ENCODE measurements at regions of chrX and their contacts with region 1.

Region 1: GRCh38 chrX:18674788-18675735 is 3.2 kb upstream of the RS1 start:
- DNase-seq: peak; percentile 70 to 79
- H3K4me3 ChIP-seq: peak overlapping the region; percentile 83
- H3K27ac ChIP-seq: no peak overlapping the region
- H3K4me1 ChIP-seq: peaks cover 4% of the 10 kb centered on the region; the same call in 1 of the 2 replicates
- H3K27me3 ChIP-seq: no peaks in the 10 kb centered on the region
- CTCF ChIP-seq: no peak

Region 2: GRCh38 chrX:18348047-18348446 is 327.0 kb before region 1 on chrX:
- CTCF ChIA-PET with region 1: interaction called, 18 read pairs
- POLR2A ChIA-PET with region 1: no interaction called
- intact Hi-C with region 1: no loop called
- DNase-seq: no peak
- H3K4me3 ChIP-seq: no peak overlapping the region
- H3K27ac ChIP-seq: no peak overlapping the region
- H3K4me1 ChIP-seq: no peaks in the 10 kb centered on the region
- H3K27me3 ChIP-seq: peaks cover 5% of the 10 kb centered on the region; the same call in 1 of the 2 replicates
- CTCF ChIP-seq: no peak

Region 3: GRCh38 chrX:18425199-18426003 is 249.7 kb before region 1 on chrX and contains the start of gene CDKL5:
- CTCF ChIA-PET with region 1: no interaction called
- POLR2A ChIA-PET with region 1: no interaction called
- intact Hi-C with region 1: loop called (anchors 2 kb)
- DNase-seq: peak; percentile 93 to 96
- H3K4me3 ChIP-seq: peak within 1 kb of the TSS; percentile 66
- H3K27ac ChIP-seq: no peak within 1 kb of the TSS
- H3K4me1 ChIP-seq: peaks cover 3% of the 10 kb centered on the region
- H3K27me3 ChIP-seq: no peaks in the 10 kb centered on the region
- CTCF ChIP-seq: no peak
- total RNA-seq, gene CDKL5: 4.2 and 5.0 TPM in 2 replicates

Region 4: DNA sequence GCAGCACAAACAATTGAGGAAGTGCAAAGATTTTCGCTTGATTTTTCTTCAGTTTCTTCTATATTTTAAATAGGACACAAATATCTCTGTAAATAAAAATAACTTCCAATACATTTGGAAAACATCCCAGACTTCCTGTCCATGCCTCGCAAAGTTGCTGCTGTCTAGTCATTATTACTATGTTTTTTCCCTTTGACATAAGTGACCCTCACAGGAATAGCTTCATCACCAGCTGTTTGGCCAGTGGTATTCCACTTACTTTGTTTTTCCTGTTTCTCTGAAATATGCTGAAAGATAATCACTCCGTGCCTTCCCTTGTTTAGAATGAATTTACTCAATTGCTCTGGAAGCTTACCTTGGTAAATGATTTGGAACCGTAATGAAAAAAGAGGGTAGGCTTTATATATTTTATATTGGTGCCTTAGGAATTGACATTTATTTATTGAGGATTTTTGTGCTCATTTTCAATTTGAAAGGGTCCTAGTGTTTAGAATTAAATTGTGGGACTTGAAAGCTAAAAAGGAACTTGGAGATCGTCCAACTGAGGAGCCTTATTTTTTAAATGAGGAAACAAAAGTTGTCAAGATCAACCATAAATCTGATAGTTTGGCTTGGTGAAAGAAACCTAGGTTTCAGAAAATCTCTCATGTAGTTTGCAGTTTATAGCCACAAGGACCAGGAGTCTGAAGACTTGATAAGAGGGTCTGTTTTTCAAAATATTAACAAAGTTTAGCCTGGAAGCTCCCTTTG is 184.1 kb before region 1 on chrX:
- CTCF ChIA-PET with region 1: no interaction called
- POLR2A ChIA-PET with region 1: no interaction called
- intact Hi-C with region 1: no loop called
- DNase-seq: no peak
- H3K4me3 ChIP-seq: no peak overlapping the region
- H3K27ac ChIP-seq: no peak overlapping the region
- H3K4me1 ChIP-seq: no peaks in the 10 kb centered on the region
- H3K27me3 ChIP-seq: no peaks in the 10 kb centered on the region
- CTCF ChIP-seq: no peak

Region 5: GRCh38 chrX:18769812-18770573 is 94.9 kb after region 1 on chrX:
- CTCF ChIA-PET with region 1: no interaction called
- POLR2A ChIA-PET with region 1: no interaction called
- intact Hi-C with region 1: no loop called
- DNase-seq: no peak
- H3K4me3 ChIP-seq: no peak overlapping the region
- H3K27ac ChIP-seq: no peak overlapping the region
- H3K4me1 ChIP-seq: no peaks in the 10 kb centered on the region
- H3K27me3 ChIP-seq: no peaks in the 10 kb centered on the region
- CTCF ChIP-seq: no peak

Region 6: DNA sequence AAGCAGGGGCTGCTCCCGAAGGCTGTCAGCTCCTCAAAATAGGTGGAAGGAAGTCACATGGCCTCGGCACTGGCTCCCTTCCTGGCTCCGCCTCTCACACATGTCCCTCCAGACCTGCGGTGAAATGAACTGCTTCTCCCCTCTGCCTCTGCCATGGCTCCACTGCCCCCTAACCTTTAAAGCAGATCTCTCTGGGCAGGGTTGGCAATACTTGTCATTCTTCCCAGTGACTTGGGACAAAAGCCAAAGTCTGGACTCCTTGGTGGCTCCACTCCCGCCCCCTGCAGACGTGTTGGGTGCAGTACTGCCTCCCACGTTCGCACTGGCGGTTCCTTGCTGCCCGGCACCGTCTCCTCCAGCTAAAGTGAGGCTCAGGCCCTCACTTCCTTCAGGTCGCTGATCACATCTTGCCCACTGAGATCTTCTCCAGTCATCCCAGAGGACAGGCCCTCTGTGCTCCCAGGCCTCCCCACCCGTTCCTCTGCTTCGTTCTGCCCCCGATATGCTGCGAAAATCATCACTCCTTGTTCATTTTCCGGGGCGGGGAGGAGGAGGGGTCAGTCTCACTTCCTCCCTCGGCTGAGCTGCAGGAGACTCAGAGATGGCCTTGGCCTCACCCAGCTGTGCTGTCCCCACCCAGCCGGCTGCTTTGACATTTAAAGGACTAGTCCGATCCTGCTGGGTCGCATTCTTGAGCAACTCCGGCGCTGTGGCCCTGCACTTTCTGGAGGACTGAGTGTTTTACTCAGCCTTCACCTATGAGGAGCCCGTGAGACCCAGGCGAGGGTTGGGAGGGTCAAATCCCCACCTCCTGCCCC is 211.5 kb after region 1 on chrX:
- CTCF ChIA-PET with region 1: no interaction called
- POLR2A ChIA-PET with region 1: no interaction called
- intact Hi-C with region 1: loop called (anchors 1 kb)
- DNase-seq: peak; percentile 76 to 80
- H3K4me3 ChIP-seq: peak overlapping the region; percentile 51
- H3K27ac ChIP-seq: no peak overlapping the region
- H3K4me1 ChIP-seq: peaks cover 8% of the 10 kb centered on the region; the same call in 1 of the 2 replicates
- H3K27me3 ChIP-seq: no peaks in the 10 kb centered on the region
- CTCF ChIP-seq: peak; percentile 68

Measured in PC-9 (cell line).